PC-9 (cell line): ENCODE measurements at regions of chr11 and their contacts with region 1.

Region 1: DNA sequence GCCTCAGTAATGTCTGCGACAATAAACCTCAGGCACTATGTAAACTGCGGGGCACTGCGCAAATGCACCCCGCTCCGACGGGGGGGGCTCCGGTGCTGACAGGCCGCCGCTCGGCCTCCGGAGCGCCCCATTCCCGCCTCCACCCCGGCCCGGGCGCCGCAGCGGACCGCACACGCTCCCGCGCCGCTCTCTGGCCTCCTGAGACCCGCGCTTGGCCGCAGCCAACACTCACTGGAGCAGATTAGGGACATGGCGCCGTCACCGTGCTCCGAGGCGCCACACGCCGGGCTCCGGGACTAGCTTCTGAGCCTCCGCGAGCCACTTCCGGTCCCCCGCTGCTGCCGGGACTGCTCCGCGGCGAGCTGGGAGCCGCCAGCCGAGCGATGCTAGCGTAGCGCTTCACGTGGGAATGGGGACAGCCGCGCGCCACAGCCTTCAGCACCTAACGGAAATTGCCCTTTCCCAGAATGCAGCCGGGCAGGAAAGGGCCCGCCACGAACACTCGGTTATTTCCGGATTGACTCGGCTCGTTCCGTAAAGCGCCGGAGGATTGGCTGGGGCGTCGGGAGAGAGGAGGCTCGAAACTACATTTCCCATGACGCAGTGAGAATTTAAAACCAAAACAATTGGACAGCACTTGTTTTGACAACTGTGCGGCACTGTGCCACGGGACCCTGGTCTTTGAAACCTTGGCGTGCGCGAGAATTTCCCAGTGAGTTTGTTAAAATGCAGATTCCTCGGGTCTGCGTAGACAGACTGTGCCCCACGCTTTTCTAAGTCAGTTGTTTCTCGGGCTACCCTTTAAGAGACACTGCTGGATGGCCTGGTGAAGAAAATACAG is at the start of gene PRPF19:
- DNase-seq: peak; percentile 94 to 99
- H3K4me3 ChIP-seq: peak within 1 kb of the TSS; percentile 90
- H3K27ac ChIP-seq: peak within 1 kb of the TSS; percentile 81
- H3K4me1 ChIP-seq: peaks cover 23% of the 10 kb centered on the region
- H3K27me3 ChIP-seq: peaks cover 27% of the 10 kb centered on the region; the same call in 1 of the 2 replicates
- CTCF ChIP-seq: no peak
- total RNA-seq, gene PRPF19: 135 and 160 TPM in 2 replicates

Region 2: GRCh38 chr11:60841797-60842667 is 64.3 kb before region 1 on chr11 and contains the start of gene CCDC86:
- CTCF ChIA-PET with region 1: interaction called, 3 read pairs
- POLR2A ChIA-PET with region 1: interaction called, 3 read pairs
- intact Hi-C with region 1: loop called (anchors 1 kb)
- DNase-seq: peak; percentile 83 to 96
- H3K4me3 ChIP-seq: peak within 1 kb of the TSS; percentile 91
- H3K27ac ChIP-seq: peak within 1 kb of the TSS; percentile 52
- H3K4me1 ChIP-seq: peaks cover 18% of the 10 kb centered on the region
- H3K27me3 ChIP-seq: no peaks in the 10 kb centered on the region
- CTCF ChIP-seq: no peak
- total RNA-seq, gene CCDC86: 34.8 and 35.6 TPM in 2 replicates

Region 3: GRCh38 chr11:61152816-61153592 is 246.7 kb after region 1 on chr11:
- CTCF ChIA-PET with region 1: no interaction called
- POLR2A ChIA-PET with region 1: no interaction called
- intact Hi-C with region 1: loop called (anchors 5 kb)
- DNase-seq: peak; percentile 62 to 97
- H3K4me3 ChIP-seq: peak overlapping the region; percentile 8
- H3K27ac ChIP-seq: peak overlapping the region; percentile 91
- H3K4me1 ChIP-seq: peaks cover 87% of the 10 kb centered on the region
- H3K27me3 ChIP-seq: no peaks in the 10 kb centered on the region
- CTCF ChIP-seq: no peak